ENCODE measurements at regions of chr19 and their contacts with region 1.

Region 1: GRCh38 chr19:48321622-48322591 is 3.4 kb upstream of the EMP3 start:
- DNase-seq: peak; percentile 91 to 100
- H3K4me3 ChIP-seq: peak overlapping the region; percentile 83
- H3K27ac ChIP-seq: peak overlapping the region; percentile 90
- H3K4me1 ChIP-seq: peaks cover 53% of the 10 kb centered on the region
- H3K27me3 ChIP-seq: no peaks in the 10 kb centered on the region
- CTCF ChIP-seq: 0 out of 2 replicates have a peak, but pooled peaks have one; percentile 32

Region 2: GRCh38 chr19:48290771-48291488 is 31.0 kb before region 1 on chr19:
- CTCF ChIA-PET with region 1: no interaction called
- POLR2A ChIA-PET with region 1: interaction called, 17 read pairs
- intact Hi-C with region 1: no loop called
- DNase-seq: peak; percentile 65 to 82
- H3K4me3 ChIP-seq: peak overlapping the region; percentile 70
- H3K27ac ChIP-seq: no peak overlapping the region
- H3K4me1 ChIP-seq: peaks cover 13% of the 10 kb centered on the region
- H3K27me3 ChIP-seq: no peaks in the 10 kb centered on the region
- CTCF ChIP-seq: peak; percentile 99

Region 3: GRCh38 chr19:48363810-48364563 is 42.1 kb after region 1 on chr19 and contains the starts of genes SYNGR4 and TMEM143:
- CTCF ChIA-PET with region 1: interaction called, 4 read pairs
- POLR2A ChIA-PET with region 1: interaction called, 28 read pairs
- intact Hi-C with region 1: loop called (anchors 5 kb)
- DNase-seq: peak; percentile 99 to 100
- H3K4me3 ChIP-seq: peak within 1 kb of the TSS; percentile 72
- H3K27ac ChIP-seq: peak within 1 kb of the TSS; percentile 63
- H3K4me1 ChIP-seq: peaks cover 7% of the 10 kb centered on the region
- H3K27me3 ChIP-seq: no peaks in the 10 kb centered on the region
- CTCF ChIP-seq: no peak
- total RNA-seq, gene SYNGR4: 1.3 and 2.1 TPM in 2 replicates
- total RNA-seq, gene TMEM143: 24.8 and 31.3 TPM in 2 replicates

Region 4: DNA sequence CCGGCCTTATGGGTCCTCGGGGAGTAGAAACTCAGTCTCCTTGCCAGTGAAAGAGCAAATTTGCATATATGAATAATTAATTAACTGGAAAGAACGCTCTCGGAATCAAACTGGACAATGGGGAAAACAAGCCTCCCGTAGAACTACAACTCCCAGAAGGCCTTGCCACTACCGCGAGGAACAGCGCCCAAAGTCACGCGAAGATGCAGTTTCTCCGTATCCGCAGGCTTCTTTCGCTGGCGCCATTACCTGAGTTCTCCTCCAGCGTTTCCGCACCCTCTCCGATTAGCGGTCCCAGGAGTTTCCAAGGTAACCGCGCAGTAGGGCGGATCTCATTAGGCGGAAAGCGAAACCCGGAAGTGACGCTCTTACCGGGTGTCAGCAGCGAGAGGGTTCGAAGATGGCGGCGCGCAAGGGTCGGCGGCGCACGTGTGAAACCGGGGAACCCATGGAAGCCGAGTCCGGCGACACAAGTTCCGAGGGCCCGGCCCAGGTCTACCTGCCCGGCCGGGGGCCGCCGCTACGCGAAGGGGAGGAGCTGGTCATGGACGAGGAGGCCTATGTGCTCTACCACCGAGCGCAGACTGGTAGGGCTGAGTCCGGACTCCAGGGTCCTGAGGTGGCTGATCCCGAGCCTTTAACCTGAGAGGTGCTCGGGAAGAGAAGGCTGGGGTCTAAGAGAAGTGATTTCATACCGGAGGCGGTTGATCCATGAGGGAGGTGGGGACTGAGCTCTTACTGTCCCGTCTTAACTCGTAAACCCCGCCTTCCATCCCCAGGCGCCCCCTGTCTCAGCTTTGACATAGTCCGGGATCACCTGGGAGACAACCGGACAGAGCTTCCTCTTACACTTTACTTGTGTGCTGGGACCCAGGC is 123.9 kb after region 1 on chr19 and contains the start of gene GRWD1:
- CTCF ChIA-PET with region 1: no interaction called
- POLR2A ChIA-PET with region 1: interaction called, 8 read pairs
- intact Hi-C with region 1: loop called (anchors 2 kb)
- DNase-seq: peak; percentile 87 to 95
- H3K4me3 ChIP-seq: peak within 1 kb of the TSS; percentile 92
- H3K27ac ChIP-seq: peak within 1 kb of the TSS; percentile 78
- H3K4me1 ChIP-seq: peaks cover 23% of the 10 kb centered on the region; the same call in 1 of the 2 replicates
- H3K27me3 ChIP-seq: no peaks in the 10 kb centered on the region
- CTCF ChIP-seq: peak; percentile 54; the same call in 1 of the 2 replicates
- total RNA-seq, gene GRWD1: 35.5 and 44.2 TPM in 2 replicates

Region 5: GRCh38 chr19:48588670-48589399 is 266.9 kb after region 1 on chr19:
- CTCF ChIA-PET with region 1: interaction called, 5 read pairs
- POLR2A ChIA-PET with region 1: no interaction called
- intact Hi-C with region 1: loop called (anchors 1 kb)
- DNase-seq: peak; percentile 93 to 96
- H3K4me3 ChIP-seq: peak overlapping the region; percentile 43; the same call in 1 of the 2 replicates
- H3K27ac ChIP-seq: peak overlapping the region; percentile 73
- H3K4me1 ChIP-seq: peaks cover 14% of the 10 kb centered on the region
- H3K27me3 ChIP-seq: no peaks in the 10 kb centered on the region
- CTCF ChIP-seq: peak; percentile 94